Natural killer cell (primary cell): ENCODE measurements at regions of chr7 and their contacts with region 1.

Region 1: GRCh38 chr7:37198906-37199485 is 249.7 kb downstream of the ELMO1 start:
- DNase-seq: peak; percentile 73 to 85
- ATAC-seq: peak; percentile 82 to 87 (median 86)
- H3K4me3 ChIP-seq: no peak overlapping the region
- H3K4me3 Mint-ChIP-seq: no peak overlapping the region
- H3K27ac ChIP-seq: no peak overlapping the region
- H3K27ac Mint-ChIP-seq: no peak overlapping the region
- H3K4me1 ChIP-seq: no peaks in the 10 kb centered on the region
- H3K4me1 Mint-ChIP-seq: peaks cover 6 to 29% of the 10 kb centered on the region in 2 donors
- H3K27me3 ChIP-seq: no peaks in the 10 kb centered on the region
- H3K27me3 Mint-ChIP-seq: no peaks in the 10 kb centered on the region
- CTCF ChIP-seq: peak; percentile 93

Region 2: DNA sequence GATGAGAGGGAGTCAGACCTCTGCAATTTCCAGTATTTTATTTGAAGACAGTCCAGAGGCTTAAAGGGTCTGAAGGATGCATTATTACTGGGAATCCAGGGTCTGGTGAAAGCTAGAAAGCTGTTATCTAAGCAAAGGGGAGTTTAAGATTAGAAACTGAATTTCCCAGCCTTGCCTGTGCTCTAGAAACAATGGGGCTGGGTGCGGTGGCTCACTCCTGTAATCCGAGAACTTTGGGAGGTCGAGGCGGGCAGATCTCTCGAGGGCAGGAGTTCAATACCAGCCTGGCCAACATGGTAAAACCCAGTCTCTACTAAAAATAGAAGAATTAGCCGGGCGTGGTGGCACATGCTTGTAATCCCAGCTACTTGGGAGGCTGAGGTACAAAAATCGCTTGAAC is 880.9 kb before region 1 on chr7:
- intact Hi-C with region 1: loop called (anchors 2 kb)
- DNase-seq: no peak
- ATAC-seq: no peak
- H3K4me3 ChIP-seq: no peak overlapping the region
- H3K4me3 Mint-ChIP-seq: no peak overlapping the region
- H3K27ac ChIP-seq: no peak overlapping the region
- H3K27ac Mint-ChIP-seq: no peak overlapping the region
- H3K4me1 ChIP-seq: no peaks in the 10 kb centered on the region
- H3K4me1 Mint-ChIP-seq: no peaks in the 10 kb centered on the region
- H3K27me3 ChIP-seq: peaks cover 2% of the 10 kb centered on the region
- H3K27me3 Mint-ChIP-seq: peaks cover 6 to 10% of the 10 kb centered on the region in 2 donors
- CTCF ChIP-seq: no peak

Region 3: GRCh38 chr7:36440880-36441279 is 758.1 kb before region 1 on chr7:
- intact Hi-C with region 1: loop called (anchors 1 kb)
- DNase-seq: peak in 1 of 2 donors; percentile 27
- ATAC-seq: no peak
- H3K4me3 ChIP-seq: no peak overlapping the region
- H3K4me3 Mint-ChIP-seq: no peak overlapping the region
- H3K27ac ChIP-seq: no peak overlapping the region
- H3K27ac Mint-ChIP-seq: no peak overlapping the region
- H3K4me1 ChIP-seq: no peaks in the 10 kb centered on the region
- H3K4me1 Mint-ChIP-seq: no peaks in the 10 kb centered on the region
- H3K27me3 ChIP-seq: no peaks in the 10 kb centered on the region
- H3K27me3 Mint-ChIP-seq: no peaks in the 10 kb centered on the region
- CTCF ChIP-seq: peak; percentile 49

Region 4: GRCh38 chr7:36487756-36488336 is 711.1 kb before region 1 on chr7:
- intact Hi-C with region 1: loop called (anchors 1 kb)
- DNase-seq: peak in 1 of 2 donors; percentile 83
- ATAC-seq: peak; percentile 80 to 87 (median 84)
- H3K4me3 ChIP-seq: no peak overlapping the region
- H3K4me3 Mint-ChIP-seq: no peak overlapping the region
- H3K27ac ChIP-seq: no peak overlapping the region
- H3K27ac Mint-ChIP-seq: no peak overlapping the region
- H3K4me1 ChIP-seq: no peaks in the 10 kb centered on the region
- H3K4me1 Mint-ChIP-seq: peaks cover 0 to 5% of the 10 kb centered on the region in 2 donors
- H3K27me3 ChIP-seq: no peaks in the 10 kb centered on the region
- H3K27me3 Mint-ChIP-seq: no peaks in the 10 kb centered on the region
- CTCF ChIP-seq: peak; percentile 79

Region 5: DNA sequence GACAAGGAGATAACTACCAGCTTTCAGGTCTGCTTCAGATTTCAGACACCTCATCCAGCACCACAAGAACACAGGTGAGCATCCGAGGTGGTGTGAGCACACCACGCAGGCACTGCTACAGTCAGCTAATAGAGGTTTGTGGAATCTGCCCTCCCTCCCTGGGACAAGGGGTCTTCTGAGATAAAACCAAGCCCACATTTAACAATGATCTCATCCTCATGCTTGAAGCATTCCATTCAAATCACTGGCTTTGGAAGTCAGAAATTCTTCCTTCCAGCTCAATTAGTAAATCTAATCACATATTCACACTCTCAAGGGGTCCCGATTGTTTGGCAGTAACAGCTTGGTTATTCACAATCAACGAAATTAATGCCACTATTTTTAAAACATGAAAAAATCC is 81.7 kb before region 1 on chr7:
- intact Hi-C with region 1: no loop called
- DNase-seq: no peak
- ATAC-seq: no peak
- H3K4me3 ChIP-seq: no peak overlapping the region
- H3K4me3 Mint-ChIP-seq: no peak overlapping the region
- H3K27ac ChIP-seq: no peak overlapping the region
- H3K27ac Mint-ChIP-seq: no peak overlapping the region
- H3K4me1 ChIP-seq: peaks cover 5% of the 10 kb centered on the region
- H3K4me1 Mint-ChIP-seq: peaks cover 56 to 73% of the 10 kb centered on the region in 2 donors
- H3K27me3 ChIP-seq: no peaks in the 10 kb centered on the region
- H3K27me3 Mint-ChIP-seq: no peaks in the 10 kb centered on the region
- CTCF ChIP-seq: no peak